Stomach (tissue), 19 donors: ENCODE measurements at regions of chr5 and their contacts with region 1.

Region 1: DNA sequence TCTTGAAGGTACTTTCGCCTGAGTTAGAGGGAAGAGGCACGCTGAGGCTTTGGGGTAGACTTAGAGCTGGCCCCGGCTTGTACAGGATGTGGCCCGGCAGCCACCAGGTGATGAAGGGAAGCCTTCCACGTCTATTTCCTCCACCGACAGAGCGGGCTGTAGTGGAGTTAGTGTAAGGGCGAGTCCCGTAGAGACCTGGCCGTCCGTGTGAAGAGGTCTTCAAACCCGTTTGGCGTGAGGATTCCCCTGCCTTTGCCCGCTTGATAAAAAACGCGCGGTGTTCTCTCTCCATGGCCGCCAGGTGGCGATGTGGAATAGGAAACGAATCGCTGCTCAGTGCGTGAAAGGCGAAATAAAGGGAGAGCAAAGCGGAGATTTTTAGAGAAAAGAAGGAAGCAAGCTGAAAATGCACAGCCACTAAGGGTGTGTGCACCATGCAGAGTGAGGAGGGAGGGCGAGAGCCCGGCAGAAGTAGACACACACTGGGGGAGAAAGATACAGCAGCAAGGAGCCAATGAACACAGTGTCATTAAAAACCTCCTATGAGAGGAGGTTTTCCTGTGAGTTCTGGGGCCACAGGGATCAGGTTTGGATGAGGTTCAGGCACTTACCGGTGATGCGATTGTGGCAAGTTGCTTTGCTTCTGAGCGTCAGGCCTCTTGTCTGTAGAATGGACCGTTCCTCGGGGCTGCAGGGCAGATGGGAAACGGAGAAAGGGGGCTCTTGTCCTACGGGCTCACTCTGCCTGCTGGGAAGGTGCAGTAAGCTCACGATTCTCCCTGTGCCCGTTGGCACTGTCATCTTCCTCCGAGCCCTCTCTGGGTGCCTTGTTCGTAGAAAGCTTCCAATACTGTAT is 34.2 kb downstream of the STC2 start:
- DNase-seq: peak; percentile 74 to 89
- H3K4me3 ChIP-seq: peak overlapping the region in 1 of 4 donors; percentile 11
- H3K27ac ChIP-seq: no peak overlapping the region
- H3K4me1 ChIP-seq: peaks cover 0 to 19% (median 9%) of the 10 kb centered on the region in 4 donors
- H3K27me3 ChIP-seq: peaks cover 0 to 78% (median 45%) of the 10 kb centered on the region in 3 donors
- CTCF ChIP-seq: peak in 5 of 7 experiments; percentile 73 to 92 (median 87)
- EP300 ChIP-seq: no peak
- POLR2A ChIP-seq: no peak

Region 2: GRCh38 chr5:173331956-173332479 is 38.0 kb after region 1 on chr5:
- intact Hi-C with region 1: loop called (anchors 5 kb)
- DNase-seq: peak; percentile 86 to 90
- H3K4me3 ChIP-seq: no peak overlapping the region
- H3K27ac ChIP-seq: no peak overlapping the region
- H3K4me1 ChIP-seq: peaks cover 30 to 31% (median 30%) of the 10 kb centered on the region in 4 donors
- H3K27me3 ChIP-seq: peaks cover 9 to 68% (median 32%) of the 10 kb centered on the region in 3 donors
- CTCF ChIP-seq: peak in 6 of 7 experiments; percentile 40 to 92 (median 79)
- EP300 ChIP-seq: no peak
- POLR2A ChIP-seq: no peak

Region 3: GRCh38 chr5:173573126-173573960 is 279.3 kb after region 1 on chr5:
- intact Hi-C with region 1: loop called (anchors 5 kb)
- DNase-seq: peak; percentile 79 to 90
- H3K4me3 ChIP-seq: no peak overlapping the region
- H3K27ac ChIP-seq: no peak overlapping the region
- H3K4me1 ChIP-seq: peaks cover 7 to 13% (median 10%) of the 10 kb centered on the region in 4 donors
- H3K27me3 ChIP-seq: peaks cover 0 to 14% (median 0%) of the 10 kb centered on the region in 3 donors
- CTCF ChIP-seq: peak in 6 of 7 experiments; percentile 5 to 98 (median 92)
- EP300 ChIP-seq: no peak
- POLR2A ChIP-seq: no peak

Region 4: DNA sequence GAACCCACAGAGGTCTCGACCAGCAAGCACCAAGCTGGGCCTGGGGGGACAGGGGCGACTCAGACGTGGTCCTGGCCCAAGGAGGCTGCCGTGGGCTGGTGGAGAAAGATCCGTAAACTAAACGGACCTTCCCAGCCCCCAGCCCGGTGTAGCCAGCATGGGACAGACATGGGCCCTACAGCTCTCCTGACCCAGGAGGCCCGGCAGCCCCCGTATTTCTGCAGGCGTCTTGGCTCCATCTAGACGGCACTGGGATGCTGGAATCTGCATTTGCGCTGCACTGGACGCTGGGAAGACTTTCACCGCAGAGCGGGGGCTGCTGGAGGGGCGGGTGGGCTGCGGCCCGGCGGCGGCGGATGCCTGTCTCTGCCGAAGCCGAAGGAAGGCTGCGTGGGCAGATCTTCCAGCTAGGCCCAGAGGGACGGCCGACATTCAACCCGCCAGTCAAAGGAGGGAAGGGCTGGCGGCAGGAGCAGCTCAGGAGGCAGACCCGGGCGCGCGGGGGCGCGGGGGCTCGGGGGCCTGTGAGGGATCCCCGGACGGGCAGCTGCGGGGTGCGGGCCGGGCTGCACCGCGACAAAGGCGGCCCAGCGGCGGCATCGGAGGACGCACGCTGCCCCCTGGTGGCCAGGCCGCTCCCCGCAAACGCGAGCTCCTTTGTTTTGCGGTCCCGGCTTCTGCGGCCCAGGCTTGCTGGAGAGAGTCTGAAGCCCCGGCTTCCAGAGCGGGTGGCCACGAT is 1017.7 kb after region 1 on chr5:
- intact Hi-C with region 1: loop called (anchors 10 kb)
- DNase-seq: peak; percentile 72 to 90
- H3K4me3 ChIP-seq: peak overlapping the region; percentile 40 to 56 (median 44)
- H3K27ac ChIP-seq: no peak overlapping the region
- H3K4me1 ChIP-seq: peaks cover 5 to 12% (median 11%) of the 10 kb centered on the region in 4 donors
- H3K27me3 ChIP-seq: peaks cover 0 to 57% (median 18%) of the 10 kb centered on the region in 3 donors
- CTCF ChIP-seq: peak in 4 of 7 experiments; percentile 59 to 94 (median 78)
- EP300 ChIP-seq: no peak
- POLR2A ChIP-seq: no peak